Naive thymus-derived CD4-positive, alpha-beta T cell (primary cell): ENCODE measurements at regions of chr9 and their contacts with region 1.

Region 1: DNA sequence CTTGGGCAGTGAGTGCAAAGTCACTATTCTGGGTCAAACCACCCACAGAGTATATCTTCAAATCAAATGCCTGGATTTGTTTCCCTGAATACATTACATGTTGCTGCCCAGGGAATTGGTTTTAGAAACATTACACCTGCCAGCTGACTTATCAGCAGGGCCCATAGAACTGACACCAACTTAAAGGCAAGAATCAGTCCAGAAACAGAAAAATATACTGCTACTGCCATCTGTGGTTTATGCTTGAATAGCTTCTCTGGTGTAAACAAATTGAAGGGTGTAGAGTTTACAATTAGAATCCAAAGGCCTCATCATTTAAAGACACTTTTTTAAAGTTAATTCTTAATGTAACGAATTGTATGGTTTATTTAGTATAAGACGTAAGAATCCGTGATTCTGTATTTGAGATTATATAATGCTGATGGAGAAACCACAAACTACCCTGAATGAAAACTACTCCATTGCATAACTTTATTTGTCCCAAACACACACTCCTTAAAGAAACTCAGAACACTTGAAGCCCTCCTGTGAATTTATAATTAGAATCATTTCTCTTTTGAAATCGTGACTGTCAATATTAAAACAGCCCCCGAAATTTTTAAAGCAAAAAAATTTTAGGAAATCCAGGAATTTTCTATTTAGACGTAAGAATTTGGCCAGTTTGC is 6.2 kb downstream of the NR6A1 start:
- DNase-seq: no peak
- ATAC-seq: no peak
- H3K4me3 ChIP-seq: no peak overlapping the region
- H3K4me3 Mint-ChIP-seq: no peak overlapping the region
- H3K27ac ChIP-seq: no peak overlapping the region
- H3K27ac Mint-ChIP-seq: no peak overlapping the region
- H3K4me1 ChIP-seq: peaks cover 5% of the 10 kb centered on the region in 2 donors
- H3K4me1 Mint-ChIP-seq: peaks cover 0 to 14% (median 11%) of the 10 kb centered on the region in 7 donors
- H3K27me3 ChIP-seq: peaks cover 8 to 26% of the 10 kb centered on the region in 2 donors
- H3K27me3 Mint-ChIP-seq: peaks cover 68 to 92% (median 81%) of the 10 kb centered on the region in 5 donors

Region 2: DNA sequence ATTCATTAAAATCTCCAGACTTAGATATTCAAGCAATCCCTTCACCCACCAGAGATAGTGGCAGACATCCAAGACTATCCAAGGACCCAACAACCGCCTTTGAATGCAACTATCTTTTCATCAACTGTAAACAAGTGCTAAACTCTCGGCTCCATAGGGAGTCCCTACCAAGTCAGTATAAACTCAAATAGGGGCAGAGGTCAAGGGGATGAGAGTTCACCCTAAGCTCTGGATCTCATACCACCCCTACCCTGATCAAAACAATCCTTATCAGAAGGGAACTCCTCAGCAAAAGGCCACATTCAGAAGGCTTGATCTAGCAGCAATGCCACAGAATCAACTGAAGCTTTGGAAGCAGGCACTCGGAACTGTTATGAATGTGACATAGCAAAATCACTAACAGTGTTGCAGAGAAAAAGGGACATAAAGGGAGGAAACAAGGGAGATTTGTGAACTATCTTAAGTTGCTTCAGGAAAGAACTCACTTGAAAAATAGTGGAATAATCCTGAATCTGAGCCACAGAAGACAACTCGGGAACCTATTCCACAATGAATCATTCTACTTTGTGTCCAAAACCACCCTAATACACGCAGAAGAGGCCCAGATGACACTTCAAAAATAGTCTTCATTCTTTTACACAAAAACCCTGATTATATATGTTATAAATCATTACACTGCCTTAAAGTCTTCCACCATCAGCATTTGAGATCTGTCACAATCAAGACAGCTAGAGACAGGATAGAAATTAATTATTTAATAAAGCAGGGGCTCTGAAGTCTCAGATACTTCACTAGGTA is 43.6 kb before region 1 on chr9:
- CTCF ChIA-PET with region 1: no interaction called
- POLR2A ChIA-PET with region 1: no interaction called
- intact Hi-C with region 1: loop called in 1 of 2 experiments (anchors 5 kb)
- DNase-seq: no peak
- ATAC-seq: no peak
- H3K4me3 ChIP-seq: no peak overlapping the region
- H3K4me3 Mint-ChIP-seq: no peak overlapping the region
- H3K27ac ChIP-seq: no peak overlapping the region
- H3K27ac Mint-ChIP-seq: no peak overlapping the region
- H3K4me1 ChIP-seq: no peaks in the 10 kb centered on the region
- H3K4me1 Mint-ChIP-seq: no peaks in the 10 kb centered on the region
- H3K27me3 ChIP-seq: no peaks in the 10 kb centered on the region
- H3K27me3 Mint-ChIP-seq: peaks cover 0 to 12% (median 0%) of the 10 kb centered on the region in 5 donors